CD4-positive, alpha-beta memory T cell (primary cell): ENCODE measurements at regions of chr16 and their contacts with region 1.

Region 1: DNA sequence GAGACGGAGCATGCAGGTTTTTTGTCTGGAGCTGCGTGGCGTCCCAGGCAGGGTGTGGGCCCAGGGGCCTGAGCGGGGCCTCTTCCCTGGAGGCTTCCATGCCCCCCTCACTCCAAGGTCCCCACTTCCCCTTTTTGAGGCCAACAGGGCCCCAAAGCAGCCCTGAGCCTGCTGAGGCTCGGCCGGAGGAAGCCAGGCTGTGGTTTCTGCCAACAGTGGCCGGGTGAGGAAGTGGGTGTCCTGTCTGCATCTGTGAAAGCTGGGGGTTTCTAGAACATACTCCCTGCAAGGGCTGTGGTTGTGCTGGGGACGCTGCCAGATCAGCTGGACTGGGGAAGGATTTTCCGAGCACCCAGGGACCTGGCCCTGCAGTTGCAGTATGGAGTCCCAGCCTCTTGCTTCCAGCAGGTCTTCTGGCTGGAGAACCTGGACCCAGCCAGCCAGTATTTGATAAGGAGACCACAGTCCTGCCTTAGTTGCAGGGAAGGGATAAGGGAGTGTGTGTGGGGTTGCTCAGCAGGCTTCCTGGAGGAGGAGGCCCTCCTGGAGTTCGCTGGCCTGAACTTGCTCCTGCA is 15.7 kb downstream of the ADCY7 start:
- DNase-seq: peak; percentile 62 to 84 (median 67)
- H3K4me3 ChIP-seq: peak overlapping the region in 1 of 2 donors; percentile 21
- H3K4me3 Mint-ChIP-seq: peak overlapping the region; percentile 76 to 92 (median 82)
- H3K27ac ChIP-seq: peak overlapping the region; percentile 57
- H3K27ac Mint-ChIP-seq: peak overlapping the region; percentile 77 to 99 (median 91)
- H3K4me1 ChIP-seq: peaks cover 94% of the 10 kb centered on the region
- H3K4me1 Mint-ChIP-seq: peaks cover 59 to 94% (median 81%) of the 10 kb centered on the region in 4 donors
- H3K27me3 ChIP-seq: no peaks in the 10 kb centered on the region
- H3K27me3 Mint-ChIP-seq: no peaks in the 10 kb centered on the region

Region 2: DNA sequence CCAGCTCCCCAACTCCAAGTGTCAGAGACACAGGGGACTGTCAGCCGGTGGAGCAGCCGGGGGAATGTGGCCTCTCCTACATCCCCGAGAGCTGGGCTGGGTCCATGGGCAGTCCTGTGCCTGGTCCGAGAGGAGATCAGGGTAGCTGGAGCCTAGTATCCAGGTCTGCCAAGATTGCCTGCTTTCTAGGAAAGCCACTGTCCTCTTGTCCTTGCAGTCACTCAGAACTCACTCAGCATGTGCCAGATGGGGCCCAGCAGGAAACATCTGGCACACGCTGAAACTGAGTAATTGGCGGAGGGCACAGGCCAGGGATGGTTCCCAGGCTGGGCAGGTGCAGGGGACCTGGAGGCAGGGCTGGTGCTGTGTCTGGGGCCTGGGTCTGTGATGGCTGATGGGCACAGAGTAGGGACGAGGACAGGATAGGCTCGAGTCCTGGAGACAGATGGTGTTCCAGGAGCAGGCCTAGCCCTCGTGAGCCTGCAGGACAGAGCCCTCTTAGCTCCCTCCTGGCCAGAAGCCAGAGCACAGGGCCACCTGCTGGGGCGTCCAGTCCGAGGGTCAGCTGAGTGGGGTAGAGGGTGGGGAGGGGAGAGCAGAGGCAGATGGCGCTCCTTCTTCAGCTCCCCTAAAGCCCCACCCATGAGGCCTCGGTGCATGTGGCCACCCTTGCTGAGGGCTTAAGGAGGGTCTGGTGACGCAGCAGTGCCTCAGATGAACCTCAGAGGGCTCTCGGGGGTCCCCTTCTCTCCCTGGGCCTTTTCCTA is 15.4 kb after region 1 on chr16:
- CTCF ChIA-PET with region 1: interaction called, 3 read pairs
- POLR2A ChIA-PET with region 1: interaction called, 10 read pairs
- intact Hi-C with region 1: no loop called
- DNase-seq: no peak
- H3K4me3 ChIP-seq: no peak overlapping the region
- H3K4me3 Mint-ChIP-seq: no peak overlapping the region
- H3K27ac ChIP-seq: no peak overlapping the region
- H3K27ac Mint-ChIP-seq: peak overlapping the region in 3 of 7 donors; percentile 25 to 66 (median 27)
- H3K4me1 ChIP-seq: no peaks in the 10 kb centered on the region
- H3K4me1 Mint-ChIP-seq: peaks cover 3 to 15% (median 5%) of the 10 kb centered on the region in 4 donors
- H3K27me3 ChIP-seq: no peaks in the 10 kb centered on the region
- H3K27me3 Mint-ChIP-seq: no peaks in the 10 kb centered on the region

Region 3: DNA sequence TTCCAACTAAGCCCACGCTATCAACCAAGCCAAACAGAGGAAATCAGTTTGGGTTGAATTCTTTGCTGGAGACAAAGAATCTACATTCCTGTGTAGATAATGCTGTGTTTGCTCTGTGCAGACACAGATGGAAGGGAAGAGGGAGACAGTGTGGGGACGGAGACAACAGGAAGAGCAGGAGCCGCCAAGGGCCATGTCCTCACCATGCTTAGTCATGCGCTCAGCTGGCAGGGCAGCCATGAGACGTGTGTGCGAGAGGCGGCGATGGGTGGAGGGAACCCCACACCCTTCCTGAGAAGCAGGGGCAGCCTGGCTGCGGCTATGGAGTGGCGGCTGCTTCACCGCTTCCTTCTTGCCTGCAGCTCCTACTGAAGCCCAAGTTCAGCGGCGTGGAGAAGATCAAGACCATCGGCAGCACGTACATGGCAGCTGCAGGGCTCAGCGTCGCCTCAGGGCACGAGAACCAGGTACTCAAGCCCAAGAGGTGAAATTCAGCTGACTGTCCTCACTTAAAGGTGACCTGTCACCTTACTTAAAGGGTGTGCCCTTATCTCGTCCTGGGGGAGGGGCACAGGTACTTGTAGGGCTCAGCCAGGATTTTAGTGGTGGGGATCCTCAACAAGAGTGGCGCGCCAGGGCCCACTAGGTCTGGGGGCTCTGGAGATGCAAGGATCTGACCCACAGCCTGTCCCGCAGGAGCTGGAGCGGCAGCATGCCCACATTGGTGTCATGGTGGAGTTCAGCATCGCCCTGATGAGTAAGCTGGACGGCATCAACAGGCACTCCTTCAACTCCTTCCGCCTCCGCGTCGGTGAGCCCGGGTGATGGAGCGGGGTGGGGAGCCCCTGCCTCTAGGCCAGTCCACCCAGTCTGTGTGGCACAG is 31.8 kb after region 1 on chr16:
- CTCF ChIA-PET with region 1: interaction called, 3 read pairs
- POLR2A ChIA-PET with region 1: interaction called, 12 read pairs
- intact Hi-C with region 1: no loop called
- DNase-seq: peak; percentile 26 to 67 (median 44)
- H3K4me3 ChIP-seq: no peak overlapping the region
- H3K4me3 Mint-ChIP-seq: peak overlapping the region in 5 of 8 donors; percentile 3 to 76 (median 17)
- H3K27ac ChIP-seq: no peak overlapping the region
- H3K27ac Mint-ChIP-seq: peak overlapping the region; percentile 62 to 90 (median 85)
- H3K4me1 ChIP-seq: peaks cover 25% of the 10 kb centered on the region
- H3K4me1 Mint-ChIP-seq: peaks cover 15 to 49% (median 29%) of the 10 kb centered on the region in 4 donors
- H3K27me3 ChIP-seq: no peaks in the 10 kb centered on the region
- H3K27me3 Mint-ChIP-seq: no peaks in the 10 kb centered on the region

Region 4: DNA sequence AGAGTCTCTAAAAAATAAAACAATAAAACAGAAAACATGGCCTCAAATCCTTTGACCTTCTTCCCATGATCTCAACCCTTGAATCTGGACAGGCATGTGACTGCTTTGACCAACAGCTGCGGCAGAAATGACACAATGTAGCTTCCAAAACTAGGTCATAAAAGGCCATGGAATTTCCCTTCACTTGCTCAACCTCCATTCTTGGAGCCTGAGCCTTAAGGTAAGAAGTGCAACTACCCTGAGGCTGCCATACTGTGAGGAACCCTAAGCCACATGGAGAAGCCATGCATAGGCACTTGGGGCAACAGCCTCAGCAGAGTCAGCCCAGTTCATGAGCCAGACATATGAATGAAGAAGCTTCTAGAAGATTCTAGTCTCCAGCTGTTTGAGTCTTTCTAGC is 162.5 kb after region 1 on chr16:
- CTCF ChIA-PET with region 1: no interaction called
- POLR2A ChIA-PET with region 1: no interaction called
- intact Hi-C with region 1: no loop called
- DNase-seq: no peak
- H3K4me3 ChIP-seq: no peak overlapping the region
- H3K4me3 Mint-ChIP-seq: no peak overlapping the region
- H3K27ac ChIP-seq: no peak overlapping the region
- H3K27ac Mint-ChIP-seq: no peak overlapping the region
- H3K4me1 ChIP-seq: no peaks in the 10 kb centered on the region
- H3K4me1 Mint-ChIP-seq: peaks cover 0 to 8% (median under 1%) of the 10 kb centered on the region in 4 donors
- H3K27me3 ChIP-seq: no peaks in the 10 kb centered on the region
- H3K27me3 Mint-ChIP-seq: peaks cover 0 to 4% of the 10 kb centered on the region in 2 donors